H1 (cell line): ENCODE measurements at regions of chr18 and their contacts with region 1.

Region 1: GRCh38 chr18:50507120-50507590 is 52.7 kb upstream of the MAPK4 start:
- DNase-seq: peak; percentile 29 to 77
- H3K4me3 ChIP-seq: no peak overlapping the region
- H3K27ac ChIP-seq: no peak overlapping the region
- H3K4me1 ChIP-seq: peaks cover 0 to 8% (median 0%) of the 10 kb centered on the region in 4 experiments; a peak in 2 of 7 replicates
- H3K27me3 ChIP-seq: no peaks in the 10 kb centered on the region
- CTCF ChIP-seq: peak; percentile 93 to 96 (median 94)
- EP300 ChIP-seq: no peak
- POLR2A ChIP-seq: no peak
- RAD21 ChIP-seq: peak; percentile 99

Region 2: GRCh38 chr18:50410894-50411293 is 96.3 kb before region 1 on chr18:
- CTCF ChIA-PET with region 1: no interaction called
- POLR2A ChIA-PET with region 1: no interaction called
- DNase-seq: no peak
- H3K4me3 ChIP-seq: no peak overlapping the region
- H3K27ac ChIP-seq: no peak overlapping the region
- H3K4me1 ChIP-seq: peaks cover 0 to 19% (median 12%) of the 10 kb centered on the region in 4 experiments; a peak in 5 of 7 replicates
- H3K27me3 ChIP-seq: no peaks in the 10 kb centered on the region
- CTCF ChIP-seq: no peak
- EP300 ChIP-seq: no peak
- POLR2A ChIP-seq: no peak
- RAD21 ChIP-seq: no peak

Region 3: DNA sequence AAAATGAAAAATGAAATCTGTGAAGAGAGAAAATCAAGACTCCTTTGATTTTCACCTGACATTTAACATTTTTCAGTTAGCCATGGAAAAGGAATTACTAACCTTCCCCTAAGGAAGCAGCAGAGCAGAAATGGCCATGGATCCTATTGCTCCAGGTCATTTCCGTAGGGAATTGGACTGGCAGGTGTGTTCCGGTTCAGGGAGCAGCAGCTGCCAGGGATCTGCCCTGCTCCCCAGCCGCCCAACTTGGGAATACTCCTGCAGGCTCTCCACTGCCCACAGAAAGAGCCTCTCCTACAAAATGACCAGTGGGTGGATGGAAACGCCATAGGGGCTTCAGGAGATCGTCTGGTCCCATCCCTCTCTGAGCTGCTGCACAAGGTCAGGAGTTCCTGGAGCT is 33.3 kb before region 1 on chr18:
- CTCF ChIA-PET with region 1: no interaction called
- POLR2A ChIA-PET with region 1: no interaction called
- DNase-seq: no peak
- H3K4me3 ChIP-seq: no peak overlapping the region
- H3K27ac ChIP-seq: no peak overlapping the region
- H3K4me1 ChIP-seq: no peaks in the 10 kb centered on the region
- H3K27me3 ChIP-seq: no peaks in the 10 kb centered on the region
- CTCF ChIP-seq: no peak
- EP300 ChIP-seq: no peak
- POLR2A ChIP-seq: no peak
- RAD21 ChIP-seq: no peak

Region 4: DNA sequence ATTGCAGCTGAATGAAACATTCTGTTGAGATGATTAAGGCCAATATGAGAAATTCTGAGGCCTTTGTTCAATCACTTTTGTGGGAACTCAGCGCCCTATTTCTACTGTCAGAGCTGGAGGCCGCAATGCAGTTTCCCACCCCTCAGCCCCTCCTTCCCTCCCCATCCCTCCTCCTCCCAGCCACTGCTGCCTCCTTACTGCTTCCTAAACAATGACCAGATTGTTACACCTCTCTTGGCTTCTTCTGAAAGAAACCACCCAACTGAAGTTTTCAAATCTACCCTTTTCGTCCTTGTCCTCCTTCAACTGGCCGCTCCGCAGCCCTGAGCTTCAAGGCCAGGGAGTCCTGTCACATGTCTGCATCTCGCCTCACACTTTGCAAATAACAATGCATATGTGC is 16.0 kb after region 1 on chr18:
- CTCF ChIA-PET with region 1: interaction called, 10 read pairs
- POLR2A ChIA-PET with region 1: no interaction called
- DNase-seq: no peak
- H3K4me3 ChIP-seq: no peak overlapping the region
- H3K27ac ChIP-seq: no peak overlapping the region
- H3K4me1 ChIP-seq: no peaks in the 10 kb centered on the region
- H3K27me3 ChIP-seq: no peaks in the 10 kb centered on the region; a peak in 1 of 7 replicates
- CTCF ChIP-seq: no peak
- EP300 ChIP-seq: no peak
- POLR2A ChIP-seq: no peak
- RAD21 ChIP-seq: no peak